Astrocyte of the cerebellum (primary cell): ENCODE measurements at regions of chr9 and their contacts with region 1.

Region 1: GRCh38 chr9:134742822-134743535 is 101.4 kb downstream of the COL5A1 start:
- DNase-seq: no peak
- H3K4me3 ChIP-seq: no peak overlapping the region
- CTCF ChIP-seq: no peak

Region 2: DNA sequence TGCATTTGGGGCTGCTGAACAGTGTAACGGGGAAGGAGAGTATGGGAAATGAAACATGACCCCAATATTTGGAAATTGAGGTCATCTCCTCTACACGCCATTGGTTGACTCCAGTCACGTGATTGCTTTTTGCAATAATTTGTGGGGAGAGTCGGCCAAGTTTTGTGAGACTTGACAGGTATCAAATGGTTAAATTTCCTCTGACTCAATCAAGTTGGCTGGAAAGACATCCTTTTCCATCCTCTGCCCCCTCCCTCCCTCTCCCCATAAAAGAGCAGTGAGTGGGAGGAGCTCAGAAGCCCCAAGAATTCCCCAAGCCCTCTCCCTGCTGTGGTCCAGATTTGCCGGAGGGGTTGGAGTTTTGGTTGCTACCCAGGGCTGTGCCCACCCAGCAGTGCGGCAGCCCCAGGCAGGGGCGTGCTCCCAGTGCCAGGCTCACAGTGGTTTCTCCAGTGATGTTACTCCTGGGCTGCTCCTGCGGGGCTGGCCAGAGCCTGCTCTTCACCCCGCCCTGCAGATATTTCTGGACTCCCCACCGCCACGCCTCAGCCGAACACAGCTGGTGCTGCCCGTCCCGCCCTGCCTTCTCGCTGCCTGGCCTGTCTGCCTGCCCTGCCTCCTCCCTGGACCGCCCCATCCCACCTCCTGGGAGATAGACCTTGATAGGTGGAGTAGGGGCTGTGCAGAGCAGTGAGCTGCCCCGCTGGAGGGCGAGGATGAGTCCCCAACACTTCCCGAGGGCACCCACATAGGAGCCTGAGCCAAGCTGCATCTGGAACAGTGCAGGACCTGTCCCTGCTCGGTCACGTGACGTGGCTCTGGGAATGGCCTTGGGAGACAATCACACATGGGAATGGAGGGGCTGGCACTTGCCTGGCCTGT is 98.0 kb before region 1 on chr9:
- in situ Hi-C with region 1: loop called (anchors 5 kb)
- DNase-seq: peak; percentile 99
- H3K4me3 ChIP-seq: peak overlapping the region; percentile 49
- CTCF ChIP-seq: no peak

Region 3: DNA sequence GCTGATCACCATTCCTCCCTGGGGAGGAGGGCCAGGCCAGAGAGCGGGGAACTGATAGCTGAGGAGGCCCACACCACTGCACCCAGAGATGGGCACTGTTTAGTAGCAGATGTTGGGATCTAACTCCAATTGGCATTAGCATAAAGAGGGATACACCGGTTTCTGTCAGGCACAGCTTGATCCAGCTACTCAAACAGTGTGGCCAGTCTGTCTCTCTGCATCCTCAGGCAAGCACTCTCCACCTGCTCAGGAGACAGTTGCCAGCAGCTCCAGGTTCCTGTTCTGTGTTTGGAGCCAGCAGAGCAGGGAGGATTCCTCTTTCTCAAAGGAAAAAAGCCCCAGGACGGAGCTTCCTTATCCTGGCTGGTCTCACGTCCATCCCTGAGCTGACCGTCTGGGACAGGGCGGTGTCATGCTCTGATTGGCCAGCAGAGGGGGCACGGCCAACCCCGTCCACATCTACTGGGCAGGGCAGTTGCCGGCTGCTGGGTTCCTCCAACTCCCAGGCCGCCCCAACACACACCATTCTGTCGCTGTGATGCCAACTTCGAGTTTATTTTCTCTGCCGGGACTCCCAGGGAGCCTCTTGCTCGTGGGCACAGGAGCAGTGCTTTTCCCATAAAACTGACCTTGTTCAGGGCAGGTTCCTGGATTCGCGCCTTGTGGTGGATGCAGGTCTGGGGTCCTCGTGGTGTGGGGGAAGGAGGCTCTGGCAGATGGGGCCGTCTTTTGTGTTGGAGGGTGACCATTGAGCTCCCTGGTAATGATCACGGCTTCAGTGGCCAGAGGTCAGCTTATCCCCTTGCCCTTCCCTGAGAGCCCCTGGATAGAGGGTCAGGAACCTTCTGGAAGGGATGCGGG is 53.4 kb before region 1 on chr9:
- in situ Hi-C with region 1: loop called (anchors 5 kb)
- DNase-seq: no peak
- H3K4me3 ChIP-seq: no peak overlapping the region
- CTCF ChIP-seq: peak; percentile 89

Region 4: DNA sequence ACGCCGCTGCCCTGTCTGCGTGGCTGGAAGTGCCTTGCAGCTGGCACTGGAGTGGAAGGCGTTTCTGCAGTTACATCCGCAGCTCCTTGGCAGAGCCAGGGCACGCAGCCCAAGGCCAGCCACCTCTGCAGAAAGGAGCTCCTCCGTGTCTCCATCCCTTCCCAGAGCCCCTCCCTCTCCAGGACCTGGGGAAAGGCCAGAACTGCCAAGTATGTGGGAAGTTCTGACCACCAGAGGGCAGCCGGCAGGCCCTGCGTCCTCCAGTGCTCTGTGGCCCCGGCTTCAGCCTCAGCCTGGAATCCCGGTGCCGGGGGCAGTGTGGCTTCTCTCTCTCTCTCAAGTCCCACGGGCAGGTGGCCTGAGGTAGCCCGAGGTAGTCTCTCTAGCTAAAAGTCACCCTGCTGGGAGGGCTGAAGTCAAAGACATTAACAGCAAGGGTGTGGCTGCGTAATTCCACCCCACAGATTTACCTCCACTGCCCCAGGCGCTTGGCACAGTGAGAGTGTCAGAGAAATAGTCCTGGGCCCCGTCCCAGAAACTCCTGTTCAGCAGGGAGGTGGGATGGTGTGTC is 35.9 kb after region 1 on chr9:
- in situ Hi-C with region 1: no loop called
- DNase-seq: peak; percentile 29
- H3K4me3 ChIP-seq: no peak overlapping the region
- CTCF ChIP-seq: peak; percentile 77